ENCODE measurements at regions of chr1 and their contacts with region 1.

Region 1: DNA sequence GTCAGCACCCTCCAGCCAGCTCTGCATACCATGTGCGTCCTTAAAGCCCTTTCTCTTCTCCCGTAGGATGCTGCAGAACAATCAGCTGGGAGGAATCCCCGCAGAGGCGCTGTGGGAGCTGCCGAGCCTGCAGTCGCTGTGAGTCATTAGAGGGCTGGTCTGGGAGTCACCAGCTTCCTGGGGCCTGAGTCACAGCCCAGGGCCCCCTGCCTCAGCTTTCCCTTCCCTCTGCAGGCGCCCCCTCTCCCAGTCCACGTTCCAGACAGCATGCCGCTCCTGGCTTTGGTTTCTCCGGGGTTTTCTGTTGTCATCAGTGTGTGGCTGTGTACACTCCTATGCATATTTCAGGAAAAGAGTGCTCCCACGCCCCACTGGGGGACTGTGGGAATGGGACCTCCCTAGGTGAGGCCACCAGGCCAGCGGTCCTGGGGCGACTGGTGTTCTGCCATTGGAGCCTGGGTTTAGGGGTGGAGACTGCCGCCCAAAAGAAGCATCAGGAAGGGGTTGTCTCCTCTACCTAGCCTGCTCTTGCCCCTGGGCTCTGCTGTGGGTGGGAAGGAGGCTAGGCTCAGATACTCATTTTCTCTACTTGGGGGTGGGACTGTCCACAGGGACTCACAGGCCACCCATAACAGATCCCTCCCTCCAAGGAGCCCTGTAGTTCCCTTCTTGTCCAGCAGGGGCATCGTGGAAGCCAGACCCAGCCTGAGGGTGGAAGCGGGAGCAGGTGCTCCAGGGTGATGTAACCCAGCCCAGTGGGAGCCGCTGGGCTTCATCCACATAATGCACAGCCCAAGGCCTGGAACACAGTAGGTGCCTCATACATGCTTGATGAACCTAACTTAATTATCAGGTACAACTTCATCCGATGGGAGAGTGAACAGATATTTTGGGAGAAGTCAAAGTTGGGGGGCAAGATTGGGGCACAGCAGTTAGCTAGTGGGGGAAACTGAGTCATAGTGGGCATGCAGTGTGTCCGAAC is 42.5 kb downstream of the LGR6 start:
- DNase-seq: peak; percentile 81 to 97
- H3K4me3 ChIP-seq: no peak overlapping the region
- H3K27ac ChIP-seq: no peak overlapping the region
- H3K4me1 ChIP-seq: peaks cover 0 to 18% (median 10%) of the 10 kb centered on the region in 4 experiments; a peak in 6 of 7 replicates
- H3K27me3 ChIP-seq: no peaks in the 10 kb centered on the region
- CTCF ChIP-seq: peak; percentile 81 to 97 (median 97)
- EP300 ChIP-seq: no peak; a peak in 1 of 3 replicates
- POLR2A ChIP-seq: no peak
- RAD21 ChIP-seq: peak; percentile 37 to 57; a peak in 3 of 4 replicates

Region 2: GRCh38 chr1:202207292-202207691 is 28.9 kb before region 1 on chr1:
- CTCF ChIA-PET with region 1: interaction called, 249 read pairs
- POLR2A ChIA-PET with region 1: no interaction called
- DNase-seq: no peak
- H3K4me3 ChIP-seq: no peak overlapping the region
- H3K27ac ChIP-seq: no peak overlapping the region
- H3K4me1 ChIP-seq: peaks cover 0 to 2% (median 0%) of the 10 kb centered on the region in 4 experiments; a peak in 1 of 7 replicates
- H3K27me3 ChIP-seq: peaks cover 0 to 2% (median 0%) of the 10 kb centered on the region in 4 experiments; a peak in 1 of 7 replicates
- CTCF ChIP-seq: peak; percentile 48 to 59 (median 51)
- EP300 ChIP-seq: no peak
- POLR2A ChIP-seq: no peak
- RAD21 ChIP-seq: peak; percentile 32 to 48; a peak in 3 of 4 replicates

Region 3: DNA sequence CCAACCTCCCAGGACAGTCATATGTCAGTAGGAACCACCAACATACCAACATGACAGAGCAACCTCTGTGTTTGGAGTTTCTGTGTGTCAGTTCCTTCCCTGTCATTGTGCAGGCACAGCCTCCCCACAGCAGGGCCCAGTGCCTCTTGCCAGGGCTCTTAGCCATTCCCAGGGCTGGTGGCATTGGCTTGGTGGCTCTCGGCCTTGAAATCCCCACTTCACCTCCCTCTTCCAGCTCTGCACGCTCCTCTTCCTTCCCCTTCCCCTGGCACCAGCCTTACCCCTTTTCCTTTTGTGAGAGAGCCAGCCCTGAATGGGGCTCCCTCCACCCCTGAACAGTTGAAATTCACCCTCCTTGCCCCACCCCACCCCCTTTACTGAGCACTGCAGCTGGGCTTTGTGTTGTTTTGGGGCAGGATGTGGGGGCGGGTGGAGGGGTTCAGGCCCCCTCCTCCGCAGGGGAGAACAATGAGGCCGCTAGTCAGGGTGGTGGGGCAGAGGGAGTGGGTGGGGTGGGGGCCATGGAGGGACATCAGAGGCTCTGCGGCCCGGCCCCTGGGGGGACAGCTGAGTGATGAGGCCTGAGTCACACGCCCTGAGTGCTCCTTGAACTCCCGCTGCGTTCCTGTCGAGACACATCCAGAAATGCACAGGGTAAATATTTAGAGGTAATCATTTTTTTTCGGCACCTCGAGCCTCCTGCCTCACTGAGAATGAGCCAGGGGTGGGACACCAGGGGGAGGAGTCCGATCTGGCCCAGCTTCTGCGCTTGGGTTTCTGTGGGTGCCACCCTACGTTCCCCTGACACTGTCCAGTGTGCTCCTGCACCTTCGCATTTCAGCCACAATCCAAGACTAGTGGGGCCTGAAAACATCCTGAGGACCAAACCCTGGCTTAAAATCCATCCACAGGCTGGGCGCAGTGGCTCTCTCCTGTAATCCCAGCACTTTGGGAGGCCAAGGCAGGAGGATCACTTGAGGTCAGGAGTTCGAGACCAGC is 13.9 kb before region 1 on chr1:
- CTCF ChIA-PET with region 1: interaction called, 249 read pairs
- POLR2A ChIA-PET with region 1: interaction called, 4 read pairs
- DNase-seq: no peak
- H3K4me3 ChIP-seq: no peak overlapping the region
- H3K27ac ChIP-seq: no peak overlapping the region
- H3K4me1 ChIP-seq: peaks cover 0 to 7% (median 1%) of the 10 kb centered on the region in 4 experiments; a peak in 3 of 7 replicates
- H3K27me3 ChIP-seq: no peaks in the 10 kb centered on the region
- CTCF ChIP-seq: no peak
- EP300 ChIP-seq: no peak
- POLR2A ChIP-seq: no peak
- RAD21 ChIP-seq: no peak

Region 4: DNA sequence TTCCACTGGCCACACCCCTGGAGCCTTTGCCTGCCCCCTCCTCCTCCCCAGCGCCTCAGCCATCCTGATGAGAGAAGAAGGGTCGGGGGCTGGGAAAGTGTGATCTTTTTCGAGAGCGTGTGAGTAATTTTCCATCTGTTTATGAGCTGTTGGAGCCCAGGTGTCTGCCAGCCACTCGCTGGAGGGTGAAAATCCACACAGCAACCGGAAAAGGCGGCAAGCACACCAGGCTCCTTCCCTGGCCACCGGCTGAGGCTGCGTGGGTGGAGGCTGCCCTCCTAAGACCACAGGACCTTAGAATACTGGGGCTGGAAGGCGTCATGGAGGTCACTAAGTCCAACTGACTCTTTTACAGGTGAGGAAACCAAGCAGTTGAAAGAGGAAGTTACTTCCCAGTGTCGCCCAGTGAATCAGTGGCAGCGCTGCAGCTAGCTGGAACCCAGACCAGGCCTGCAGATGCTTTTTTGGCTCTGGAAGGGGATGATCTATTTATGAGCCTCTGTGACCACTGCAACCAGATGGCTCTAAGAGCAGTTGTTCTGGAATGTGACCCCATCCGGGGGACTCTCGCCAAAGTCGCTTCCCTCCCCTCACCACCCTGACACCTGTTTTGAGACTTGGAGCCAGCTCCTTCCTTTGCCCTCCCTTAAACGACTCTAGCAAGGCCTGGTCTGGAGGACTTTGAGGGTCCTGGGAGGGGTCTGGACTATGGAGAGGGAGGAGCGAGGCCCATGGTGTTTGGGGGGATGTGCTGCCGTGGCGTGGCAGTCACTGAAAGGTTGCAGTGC is 11.9 kb after region 1 on chr1:
- CTCF ChIA-PET with region 1: interaction called, 19 read pairs
- POLR2A ChIA-PET with region 1: interaction called, 4 read pairs
- DNase-seq: no peak
- H3K4me3 ChIP-seq: no peak overlapping the region
- H3K27ac ChIP-seq: no peak overlapping the region
- H3K4me1 ChIP-seq: peaks cover 4 to 6% (median 5%) of the 10 kb centered on the region in 4 experiments
- H3K27me3 ChIP-seq: no peaks in the 10 kb centered on the region; a peak in 2 of 7 replicates
- CTCF ChIP-seq: no peak
- EP300 ChIP-seq: no peak
- POLR2A ChIP-seq: no peak
- RAD21 ChIP-seq: no peak

Region 5: GRCh38 chr1:202255343-202255742 is 19.2 kb after region 1 on chr1:
- CTCF ChIA-PET with region 1: interaction called, 15 read pairs
- POLR2A ChIA-PET with region 1: interaction called, 4 read pairs
- DNase-seq: no peak
- H3K4me3 ChIP-seq: no peak overlapping the region
- H3K27ac ChIP-seq: no peak overlapping the region
- H3K4me1 ChIP-seq: no peaks in the 10 kb centered on the region
- H3K27me3 ChIP-seq: no peaks in the 10 kb centered on the region; a peak in 1 of 7 replicates
- CTCF ChIP-seq: no peak
- EP300 ChIP-seq: no peak
- POLR2A ChIP-seq: no peak
- RAD21 ChIP-seq: no peak